ENCODE measurements at regions of chr22 and their contacts with region 1.

Region 1: GRCh38 chr22:28594797-28595462 is 84.7 kb downstream of the TTC28 start:
- DNase-seq: no peak
- H3K4me3 Mint-ChIP-seq: no peak overlapping the region
- H3K27ac Mint-ChIP-seq: no peak overlapping the region
- H3K4me1 Mint-ChIP-seq: no peaks in the 10 kb centered on the region
- H3K27me3 Mint-ChIP-seq: peaks cover 30% of the 10 kb centered on the region

Region 2: GRCh38 chr22:27880778-27881394 is 714.0 kb before region 1 on chr22:
- intact Hi-C with region 1: loop called (anchors 10 kb)
- DNase-seq: peak; percentile 11
- H3K4me3 Mint-ChIP-seq: no peak overlapping the region
- H3K27ac Mint-ChIP-seq: peak overlapping the region; percentile 44
- H3K4me1 Mint-ChIP-seq: peaks cover 35% of the 10 kb centered on the region
- H3K27me3 Mint-ChIP-seq: no peaks in the 10 kb centered on the region

Region 3: GRCh38 chr22:28019881-28020871 is 574.8 kb before region 1 on chr22:
- intact Hi-C with region 1: loop called (anchors 1 kb)
- DNase-seq: peak; percentile 48
- H3K4me3 Mint-ChIP-seq: no peak overlapping the region
- H3K27ac Mint-ChIP-seq: no peak overlapping the region
- H3K4me1 Mint-ChIP-seq: peaks cover 10% of the 10 kb centered on the region
- H3K27me3 Mint-ChIP-seq: no peaks in the 10 kb centered on the region

Region 4: DNA sequence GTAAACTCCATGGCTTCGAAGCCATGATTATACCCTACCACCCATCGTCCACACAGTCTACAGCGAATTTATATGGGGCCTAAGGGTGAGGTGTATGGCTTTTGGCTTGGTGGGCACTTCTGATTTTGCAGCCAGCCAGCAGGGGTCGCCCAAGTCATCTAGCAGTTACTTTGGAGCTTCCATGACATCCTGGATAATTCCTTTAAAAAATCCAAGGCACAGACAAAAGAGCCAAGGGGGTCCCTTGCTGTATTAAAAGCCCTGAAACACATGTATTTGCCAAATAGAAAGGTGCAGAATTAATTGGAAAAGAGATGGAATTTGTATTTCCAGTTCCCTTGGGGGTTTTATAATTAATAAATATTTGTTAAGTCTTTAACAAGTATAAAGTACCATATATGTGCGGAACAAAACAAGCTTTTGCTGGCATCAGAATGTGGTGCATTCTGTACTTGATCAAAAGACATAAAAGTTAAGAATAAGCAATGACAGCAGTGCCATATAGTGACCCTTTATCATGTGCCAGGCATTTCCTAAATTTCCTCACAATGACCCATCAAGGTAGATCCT is 543.1 kb before region 1 on chr22:
- intact Hi-C with region 1: loop called (anchors 1 kb)
- DNase-seq: no peak
- H3K4me3 Mint-ChIP-seq: no peak overlapping the region
- H3K27ac Mint-ChIP-seq: no peak overlapping the region
- H3K4me1 Mint-ChIP-seq: no peaks in the 10 kb centered on the region
- H3K27me3 Mint-ChIP-seq: no peaks in the 10 kb centered on the region

Region 5: GRCh38 chr22:28247667-28248363 is 347.1 kb before region 1 on chr22:
- intact Hi-C with region 1: loop called (anchors 2 kb)
- DNase-seq: no peak
- H3K4me3 Mint-ChIP-seq: no peak overlapping the region
- H3K27ac Mint-ChIP-seq: no peak overlapping the region
- H3K4me1 Mint-ChIP-seq: no peaks in the 10 kb centered on the region
- H3K27me3 Mint-ChIP-seq: no peaks in the 10 kb centered on the region

Region 6: DNA sequence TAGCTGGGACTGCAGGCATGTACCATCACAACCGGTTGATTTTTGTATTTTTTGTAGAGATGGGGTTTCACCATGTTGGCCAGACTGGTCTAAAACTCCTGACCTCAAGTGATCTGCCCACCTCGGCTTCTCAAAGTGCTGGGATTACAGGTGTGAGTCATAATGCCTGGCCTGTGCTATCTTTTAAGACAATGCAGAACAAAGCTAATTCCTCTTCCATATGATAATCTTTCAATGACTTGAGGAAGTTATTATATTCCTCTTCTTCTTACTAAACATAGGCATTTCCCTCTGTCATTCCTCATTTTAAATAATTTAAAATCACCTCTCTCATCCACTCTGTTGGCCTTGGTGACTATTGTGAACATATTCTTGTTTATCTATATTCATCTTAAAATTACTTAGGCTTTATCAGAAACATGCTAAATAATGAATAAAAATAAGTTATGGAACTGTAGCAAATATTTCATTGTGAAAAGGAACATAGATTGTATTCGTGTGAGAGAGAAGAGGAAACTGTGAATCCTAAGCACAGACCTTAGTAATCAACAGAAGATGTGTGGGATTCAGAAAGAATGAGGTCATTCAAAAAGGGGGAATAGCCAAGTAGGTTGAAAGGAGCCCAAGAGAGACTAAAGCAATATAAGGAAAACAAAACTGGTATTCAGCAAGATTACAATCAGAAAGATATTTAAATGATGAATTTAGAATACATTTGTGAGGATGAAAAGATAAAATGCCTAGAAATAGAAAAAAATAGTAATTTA is 184.7 kb before region 1 on chr22:
- intact Hi-C with region 1: no loop called
- DNase-seq: no peak
- H3K4me3 Mint-ChIP-seq: no peak overlapping the region
- H3K27ac Mint-ChIP-seq: no peak overlapping the region
- H3K4me1 Mint-ChIP-seq: peaks cover 10% of the 10 kb centered on the region
- H3K27me3 Mint-ChIP-seq: no peaks in the 10 kb centered on the region

Region 7: GRCh38 chr22:28514321-28514821 is 80.6 kb before region 1 on chr22:
- intact Hi-C with region 1: no loop called
- DNase-seq: no peak
- H3K4me3 Mint-ChIP-seq: no peak overlapping the region
- H3K27ac Mint-ChIP-seq: no peak overlapping the region
- H3K4me1 Mint-ChIP-seq: no peaks in the 10 kb centered on the region
- H3K27me3 Mint-ChIP-seq: peaks cover 18% of the 10 kb centered on the region

Region 8: GRCh38 chr22:28846994-28847393 is 252.1 kb after region 1 on chr22:
- intact Hi-C with region 1: no loop called
- DNase-seq: no peak
- H3K4me3 Mint-ChIP-seq: no peak overlapping the region
- H3K27ac Mint-ChIP-seq: no peak overlapping the region
- H3K4me1 Mint-ChIP-seq: no peaks in the 10 kb centered on the region
- H3K27me3 Mint-ChIP-seq: peaks cover 4% of the 10 kb centered on the region

Measured in activated T-helper 1 cell treated with anti-CD3 and anti-CD28 coated beads, Interleukin-12 subunit alpha, Interleukin-12 subunit beta, Interleukin-2, Interleukin-4 antibody, amounts not matched to agents 30 ng/mL and 10 ng/mL and 1 ng/mL, durations not matched to agents 14 hours and 24 hours and 36 hours (primary cell).